ENCODE measurements at regions of chr3 and their contacts with region 1.

Region 1: GRCh38 chr3:129095285-129095684 is 26.3 kb downstream of the RAB43 start:
- DNase-seq: no peak
- ATAC-seq: no peak
- H3K4me3 Mint-ChIP-seq: no peak overlapping the region
- H3K27ac Mint-ChIP-seq: no peak overlapping the region
- H3K4me1 Mint-ChIP-seq: no peaks in the 10 kb centered on the region
- H3K27me3 Mint-ChIP-seq: no peaks in the 10 kb centered on the region
- CTCF ChIP-seq: no peak

Region 2: GRCh38 chr3:129183569-129184395 is 88.5 kb after region 1 on chr3 and contains the start of gene CNBP:
- CTCF ChIA-PET with region 1: no interaction called
- POLR2A ChIA-PET with region 1: interaction called, 11 read pairs
- DNase-seq: peak; percentile 87
- ATAC-seq: peak; percentile 95
- H3K4me3 Mint-ChIP-seq: peak within 1 kb of the TSS; percentile 89
- H3K27ac Mint-ChIP-seq: peak within 1 kb of the TSS; percentile 94
- H3K4me1 Mint-ChIP-seq: peaks cover 28% of the 10 kb centered on the region
- H3K27me3 Mint-ChIP-seq: no peaks in the 10 kb centered on the region
- CTCF ChIP-seq: no peak
- total RNA-seq, gene CNBP: 329 to 390 TPM (median 380 TPM) in 3 replicates

Measured in WTC11 (cell line).